HEK293 (cell line): ENCODE measurements at regions of chr11 and their contacts with region 1.

Region 1: GRCh38 chr11:64185816-64186498 is at the start of gene STIP1:
- H3K4me3 ChIP-seq: peak within 1 kb of the TSS; percentile 75
- H3K27ac ChIP-seq: peak within 1 kb of the TSS; percentile 82
- H3K4me1 ChIP-seq: peaks cover 3% of the 10 kb centered on the region; the same call in 1 of the 2 replicates
- CTCF ChIP-seq: peak; percentile 65

Region 2: GRCh38 chr11:63986156-63986931 is 199.6 kb before region 1 on chr11 and contains the start of gene OTUB1:
- CTCF ChIA-PET with region 1: no interaction called
- POLR2A ChIA-PET with region 1: no interaction called
- H3K4me3 ChIP-seq: peak within 1 kb of the TSS; percentile 95
- H3K27ac ChIP-seq: peak within 1 kb of the TSS; percentile 76
- H3K4me1 ChIP-seq: 0 out of 2 replicates have a peak, but pooled peaks cover 2% of the 10 kb centered on the region
- CTCF ChIP-seq: no peak

Region 3: DNA sequence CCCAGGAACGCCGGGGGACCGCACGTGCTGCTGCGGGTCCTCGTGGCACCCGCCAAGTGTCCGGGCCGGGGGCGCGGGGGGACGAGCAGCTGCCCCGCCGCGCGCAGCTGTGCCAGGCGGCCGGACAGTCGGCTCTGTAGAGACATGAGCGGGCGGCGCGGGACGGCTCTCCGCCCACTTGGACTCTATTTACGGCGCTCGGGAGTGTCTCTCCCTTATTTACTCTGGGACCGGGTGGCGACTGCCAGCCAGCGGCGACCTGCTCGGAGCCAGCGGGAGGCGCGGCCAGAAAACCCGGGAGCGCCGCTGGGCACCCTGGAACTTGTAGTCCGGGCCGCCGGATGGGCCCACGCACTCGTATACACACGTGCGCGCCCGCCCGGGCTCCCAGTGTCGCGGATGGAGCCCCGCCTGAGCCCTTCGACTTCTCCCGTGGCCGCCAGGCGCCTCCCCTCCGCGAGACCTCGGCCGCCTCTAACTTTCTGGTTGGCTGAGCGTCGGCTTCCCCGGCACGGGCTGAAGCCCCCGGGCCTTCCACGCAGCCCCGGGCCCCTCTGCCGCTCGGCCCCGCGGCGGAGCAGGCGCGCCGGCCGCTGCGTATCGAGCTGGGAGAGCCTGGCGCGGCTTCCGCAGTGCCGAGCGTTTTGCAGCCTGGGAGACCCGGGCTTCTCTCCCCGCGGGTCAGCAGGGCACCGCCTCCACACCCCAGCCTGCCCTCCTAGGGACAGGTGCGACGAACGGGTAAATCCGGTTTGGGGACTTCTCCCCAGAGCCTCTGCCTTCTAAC is 19.9 kb before region 1 on chr11 and contains the start of gene MACROD1:
- CTCF ChIA-PET with region 1: interaction called, 3 read pairs
- POLR2A ChIA-PET with region 1: interaction called, 20 read pairs
- H3K4me3 ChIP-seq: peak within 1 kb of the TSS; percentile 59
- H3K27ac ChIP-seq: peak within 1 kb of the TSS; percentile 47; the same call in 1 of the 2 replicates
- H3K4me1 ChIP-seq: 0 out of 2 replicates have a peak, but pooled peaks cover 2% of the 10 kb centered on the region
- CTCF ChIP-seq: no peak

Region 4: GRCh38 chr11:64196626-64197025 is 10.7 kb after region 1 on chr11:
- CTCF ChIA-PET with region 1: interaction called, 3 read pairs
- POLR2A ChIA-PET with region 1: interaction called, 14 read pairs
- H3K4me3 ChIP-seq: no peak overlapping the region
- H3K27ac ChIP-seq: no peak overlapping the region
- H3K4me1 ChIP-seq: no peaks in the 10 kb centered on the region
- CTCF ChIP-seq: no peak

Region 5: DNA sequence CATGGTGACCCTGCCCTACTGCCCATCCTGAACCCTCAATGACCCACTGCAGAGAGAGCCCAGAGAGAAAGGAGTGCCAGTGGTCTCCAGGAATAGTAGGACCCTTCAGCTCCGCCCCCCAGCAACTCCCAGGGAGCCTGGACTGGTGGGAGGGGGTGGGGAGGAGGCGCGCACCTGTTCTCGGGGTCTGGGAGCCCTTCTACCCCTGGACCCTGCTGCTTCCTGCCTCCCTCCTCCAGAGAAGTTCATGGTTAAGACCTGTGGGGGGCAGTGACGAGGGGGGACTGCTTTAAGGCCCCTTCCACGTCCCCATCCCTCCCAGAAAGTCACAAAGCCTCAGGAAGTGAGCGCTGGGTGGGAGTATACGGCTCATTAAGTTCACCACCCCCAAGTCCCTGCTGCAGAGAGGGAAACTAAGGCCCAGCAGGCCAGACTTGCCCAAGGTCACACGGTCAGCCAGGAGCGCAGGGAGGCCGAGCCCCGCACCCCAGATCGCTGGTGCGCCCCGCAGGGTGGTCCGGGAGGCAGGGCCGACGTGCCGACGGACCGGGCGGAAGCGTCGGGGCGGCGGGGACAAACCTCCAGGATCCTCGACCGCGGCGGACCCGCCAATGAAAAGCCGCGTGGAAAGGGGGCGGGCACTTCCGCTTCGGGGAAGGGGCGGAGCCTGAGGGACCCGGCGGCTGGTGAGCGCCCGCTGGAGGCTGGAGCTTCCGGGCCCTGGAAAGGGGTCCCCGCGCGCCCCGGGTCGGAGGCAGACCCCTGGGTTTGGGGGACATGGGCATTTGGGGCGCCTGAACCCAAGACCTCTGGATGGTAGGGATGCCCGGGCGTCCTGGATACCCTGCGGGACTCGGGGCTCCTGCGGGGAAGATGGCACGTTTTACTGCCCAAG is 39.9 kb after region 1 on chr11 and contains the starts of genes NUDT22 and TRPT1:
- CTCF ChIA-PET with region 1: interaction called, 4 read pairs
- POLR2A ChIA-PET with region 1: interaction called, 29 read pairs
- H3K4me3 ChIP-seq: peak within 1 kb of the TSS; percentile 77
- H3K27ac ChIP-seq: peak within 1 kb of the TSS; percentile 52; the same call in 1 of the 2 replicates
- H3K4me1 ChIP-seq: peaks cover 3% of the 10 kb centered on the region; the same call in 1 of the 2 replicates
- CTCF ChIP-seq: no peak; the same call in 1 of the 2 replicates

Region 6: DNA sequence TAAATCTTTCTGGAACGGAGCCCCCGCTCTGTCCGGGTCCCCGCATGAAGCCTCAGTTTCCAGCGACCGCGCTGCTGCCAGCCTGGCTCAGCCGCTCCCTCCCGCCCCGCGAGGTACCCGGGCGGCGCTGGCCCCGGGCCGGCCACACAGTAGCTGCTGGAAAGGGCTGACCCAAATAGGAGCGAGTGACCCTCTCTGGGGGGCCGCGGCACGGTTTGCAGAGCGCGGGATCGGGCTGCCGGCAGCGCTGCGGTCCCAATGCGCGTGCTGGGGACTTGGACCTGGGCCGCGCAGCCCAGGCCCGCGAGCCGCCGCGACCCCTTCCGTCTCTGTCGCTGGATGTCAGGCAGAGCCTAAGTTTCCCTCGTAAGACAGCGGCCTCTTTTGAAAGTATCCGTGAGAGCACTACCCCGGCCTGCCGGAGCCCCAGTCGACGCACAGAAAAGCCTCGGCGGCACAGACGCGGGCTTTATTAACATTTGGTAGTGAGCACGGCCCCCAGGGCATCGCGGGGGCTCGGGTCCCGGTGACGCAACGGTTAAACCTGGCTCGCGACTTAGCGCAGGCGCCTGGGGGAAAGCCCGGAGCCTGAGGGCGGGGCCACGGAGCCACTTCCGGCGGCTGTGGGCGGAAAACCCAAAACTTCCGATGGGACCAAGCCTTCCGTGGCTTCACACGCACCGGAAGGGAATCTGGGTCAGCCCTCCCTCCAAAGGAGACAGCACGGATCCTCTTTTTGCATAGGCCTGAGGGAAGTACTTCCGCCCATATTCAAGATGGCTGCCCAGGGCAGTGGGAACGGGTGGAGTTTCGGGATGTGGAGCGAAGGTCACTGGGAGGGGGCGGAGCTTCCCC is 83.7 kb after region 1 on chr11:
- CTCF ChIA-PET with region 1: interaction called, 4 read pairs
- POLR2A ChIA-PET with region 1: interaction called, 16 read pairs
- H3K4me3 ChIP-seq: peak overlapping the region; percentile 70
- H3K27ac ChIP-seq: peak overlapping the region; percentile 83
- H3K4me1 ChIP-seq: 0 out of 2 replicates have a peak, but pooled peaks cover 2% of the 10 kb centered on the region
- CTCF ChIP-seq: 0 out of 2 replicates have a peak, but pooled peaks have one; percentile 25

Region 7: DNA sequence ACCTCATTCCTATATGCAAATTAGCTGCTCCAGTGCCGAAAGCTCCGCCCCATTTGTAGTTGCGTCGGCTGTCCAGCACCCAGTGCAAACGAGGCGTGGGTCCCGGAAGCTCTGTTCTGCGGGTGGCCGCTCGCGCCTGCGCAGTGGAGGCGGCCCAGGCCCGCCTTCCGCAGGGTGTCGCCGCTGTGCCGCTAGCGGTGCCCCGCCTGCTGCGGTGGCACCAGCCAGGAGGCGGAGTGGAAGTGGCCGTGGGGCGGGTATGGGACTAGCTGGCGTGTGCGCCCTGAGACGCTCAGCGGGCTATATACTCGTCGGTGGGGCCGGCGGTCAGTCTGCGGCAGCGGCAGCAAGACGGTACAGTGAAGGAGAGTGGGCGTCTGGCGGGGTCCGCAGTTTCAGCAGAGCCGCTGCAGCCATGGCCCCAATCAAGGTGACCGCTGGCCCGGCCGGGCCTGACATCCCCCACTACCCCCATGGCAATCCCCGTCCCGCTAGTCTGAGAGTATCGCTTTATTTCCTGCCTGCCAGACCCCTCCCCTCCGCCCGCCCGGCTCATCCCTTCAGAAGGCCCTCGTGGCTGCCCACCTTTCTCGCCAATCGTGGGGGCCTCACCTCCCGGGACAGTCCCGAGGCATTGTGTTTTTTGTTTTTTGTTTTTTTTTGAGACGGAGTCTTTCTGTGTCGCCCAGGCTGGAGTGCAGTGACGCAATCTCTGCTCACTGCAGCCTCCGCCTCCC is 132.2 kb after region 1 on chr11 and contains the start of gene PRDX5:
- CTCF ChIA-PET with region 1: no interaction called
- POLR2A ChIA-PET with region 1: interaction called, 22 read pairs
- H3K4me3 ChIP-seq: peak within 1 kb of the TSS; percentile 90
- H3K27ac ChIP-seq: peak within 1 kb of the TSS; percentile 88
- H3K4me1 ChIP-seq: no peaks in the 10 kb centered on the region
- CTCF ChIP-seq: peak; percentile 95

Region 8: GRCh38 chr11:64583296-64584232 is 397.6 kb after region 1 on chr11:
- CTCF ChIA-PET with region 1: no interaction called
- POLR2A ChIA-PET with region 1: no interaction called
- H3K4me3 ChIP-seq: no peak overlapping the region
- H3K27ac ChIP-seq: no peak overlapping the region
- H3K4me1 ChIP-seq: no peaks in the 10 kb centered on the region
- CTCF ChIP-seq: no peak